Adrenal gland (tissue), 19 donors: ENCODE measurements at regions of chr4 and their contacts with region 1.

Region 1: GRCh38 chr4:186137196-186137794 is 32.8 kb downstream of the FAM149A start:
- DNase-seq: peak in 1 of 7 donors; percentile 13
- H3K4me3 ChIP-seq: peak overlapping the region in 1 of 4 donors; percentile 31
- H3K27ac ChIP-seq: no peak overlapping the region
- H3K4me1 ChIP-seq: no peaks in the 10 kb centered on the region
- H3K27me3 ChIP-seq: no peaks in the 10 kb centered on the region
- CTCF ChIP-seq: peak; percentile 54 to 86 (median 70)
- POLR2A ChIP-seq: no peak

Region 2: DNA sequence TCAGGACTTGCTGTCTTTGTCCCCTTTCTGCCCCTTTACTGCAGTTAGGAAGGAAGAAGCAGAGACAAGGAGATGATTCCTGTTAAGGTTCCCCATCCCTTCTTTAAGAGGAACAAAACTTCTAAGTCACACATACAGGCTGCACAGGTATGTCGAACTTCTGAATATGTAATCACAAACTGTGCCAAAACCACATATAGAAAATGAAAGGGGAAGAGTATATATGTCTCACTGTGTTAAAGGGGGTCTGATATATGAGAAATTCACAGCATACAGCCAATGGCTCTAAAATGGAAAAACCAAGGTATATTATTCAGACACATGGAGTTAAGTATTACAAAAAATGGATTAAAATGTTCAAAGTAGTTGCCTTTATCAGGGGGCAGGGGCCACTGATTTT is 945.2 kb before region 1 on chr4:
- intact Hi-C with region 1: no loop called
- DNase-seq: no peak
- H3K4me3 ChIP-seq: no peak overlapping the region
- H3K27ac ChIP-seq: no peak overlapping the region
- H3K4me1 ChIP-seq: no peaks in the 10 kb centered on the region
- H3K27me3 ChIP-seq: no peaks in the 10 kb centered on the region
- CTCF ChIP-seq: no peak
- POLR2A ChIP-seq: no peak

Region 3: DNA sequence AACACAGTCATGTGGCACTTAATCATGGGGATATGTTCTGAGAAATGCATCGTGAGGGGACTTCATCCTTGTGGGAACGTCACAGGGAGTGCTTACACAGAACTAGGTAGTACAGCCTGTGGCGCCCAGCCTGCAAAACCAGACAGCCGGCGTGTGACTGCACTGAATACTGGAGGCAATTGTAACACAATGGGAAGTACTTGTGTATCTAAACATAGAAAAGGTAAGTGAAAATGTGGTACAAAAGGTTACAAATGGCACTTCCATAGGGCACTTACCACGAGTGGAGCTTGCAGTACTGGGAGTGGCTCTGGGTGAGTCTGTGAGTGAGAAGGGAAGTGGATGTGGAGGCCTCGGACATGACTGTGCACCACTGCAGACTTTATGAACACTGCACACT is 63.1 kb before region 1 on chr4:
- intact Hi-C with region 1: loop called (anchors 5 to 10 kb)
- DNase-seq: peak in 3 of 7 donors; percentile 13 to 58 (median 20)
- H3K4me3 ChIP-seq: no peak overlapping the region
- H3K27ac ChIP-seq: no peak overlapping the region
- H3K4me1 ChIP-seq: peaks cover 6 to 8% of the 10 kb centered on the region in 2 donors
- H3K27me3 ChIP-seq: no peaks in the 10 kb centered on the region
- CTCF ChIP-seq: no peak
- POLR2A ChIP-seq: no peak

Region 4: DNA sequence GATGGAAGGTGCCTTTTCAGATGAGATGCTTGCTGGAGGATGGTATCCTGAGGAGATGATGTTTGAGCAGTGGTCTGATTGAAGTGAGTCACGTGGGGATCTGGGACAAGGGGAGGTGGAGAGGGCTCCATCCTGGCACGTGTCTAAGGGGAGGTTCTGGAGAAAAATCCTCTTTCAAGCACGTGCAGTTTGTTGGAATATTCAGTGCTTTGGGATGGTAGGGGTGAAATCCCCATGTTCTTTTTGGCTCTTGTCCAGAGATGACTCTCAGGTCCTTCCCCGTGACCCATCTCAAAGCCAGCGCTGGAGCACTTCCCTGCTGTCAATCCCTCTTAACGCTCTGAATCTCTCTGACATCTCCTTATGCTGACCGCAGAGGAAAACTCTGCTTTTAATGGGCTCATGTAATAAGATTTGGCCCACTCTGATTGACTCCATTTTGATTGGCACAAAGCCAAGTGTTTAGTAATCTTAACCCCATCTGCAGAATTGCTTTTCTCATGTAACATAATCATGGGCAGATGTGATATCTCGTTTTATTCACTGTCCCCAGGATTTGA is 79.2 kb after region 1 on chr4:
- intact Hi-C with region 1: no loop called
- DNase-seq: no peak
- H3K4me3 ChIP-seq: no peak overlapping the region
- H3K27ac ChIP-seq: no peak overlapping the region
- H3K4me1 ChIP-seq: no peaks in the 10 kb centered on the region
- H3K27me3 ChIP-seq: no peaks in the 10 kb centered on the region
- CTCF ChIP-seq: no peak
- POLR2A ChIP-seq: no peak